ENCODE measurements at regions of chr6 and their contacts with region 1.

Region 1: DNA sequence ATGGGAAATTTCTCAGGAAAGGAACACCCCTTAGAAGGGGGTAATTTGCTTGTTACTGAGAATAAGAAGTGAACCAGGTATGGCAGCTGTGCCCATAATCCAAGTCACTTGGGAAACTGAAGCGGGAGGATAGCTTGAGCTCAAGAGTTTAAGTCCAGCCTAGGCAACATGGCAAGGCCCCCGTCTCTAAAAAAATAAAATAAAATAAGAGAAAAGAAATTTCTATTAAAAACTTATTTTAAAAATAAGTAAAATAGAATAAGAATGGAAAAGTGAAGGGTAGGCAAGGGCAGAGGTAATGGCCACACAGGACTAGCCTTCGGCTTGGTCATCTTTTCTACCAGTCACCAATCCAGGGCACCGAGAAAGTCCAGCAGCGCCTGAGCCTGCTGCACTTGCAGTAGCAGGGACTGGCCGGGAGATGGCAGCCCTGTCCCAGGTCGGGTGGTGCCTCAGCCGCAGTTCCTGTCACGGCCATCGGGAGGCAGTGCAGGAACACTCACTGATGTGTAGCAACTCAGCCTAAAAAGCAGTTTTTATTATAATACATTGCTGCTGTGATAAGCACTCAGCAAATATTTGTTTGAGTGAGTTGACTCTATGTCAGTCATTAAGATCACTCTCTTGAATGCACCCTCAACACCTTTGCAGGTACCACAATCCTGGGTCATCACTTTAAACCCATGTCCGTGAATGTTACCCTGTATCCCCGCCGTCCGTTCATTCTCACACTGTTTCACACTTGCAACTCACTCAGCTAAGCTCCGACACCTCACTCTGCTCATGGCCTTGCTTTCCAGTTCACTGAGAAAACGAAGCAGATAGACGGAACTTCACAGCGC is 23.2 kb upstream of the GCM1 start:
- DNase-seq: peak; percentile 87

Region 2: GRCh38 chr6:52512199-52512598 is 659.6 kb before region 1 on chr6:
- CTCF ChIA-PET with region 1: no interaction called
- POLR2A ChIA-PET with region 1: no interaction called
- DNase-seq: no peak

Region 3: DNA sequence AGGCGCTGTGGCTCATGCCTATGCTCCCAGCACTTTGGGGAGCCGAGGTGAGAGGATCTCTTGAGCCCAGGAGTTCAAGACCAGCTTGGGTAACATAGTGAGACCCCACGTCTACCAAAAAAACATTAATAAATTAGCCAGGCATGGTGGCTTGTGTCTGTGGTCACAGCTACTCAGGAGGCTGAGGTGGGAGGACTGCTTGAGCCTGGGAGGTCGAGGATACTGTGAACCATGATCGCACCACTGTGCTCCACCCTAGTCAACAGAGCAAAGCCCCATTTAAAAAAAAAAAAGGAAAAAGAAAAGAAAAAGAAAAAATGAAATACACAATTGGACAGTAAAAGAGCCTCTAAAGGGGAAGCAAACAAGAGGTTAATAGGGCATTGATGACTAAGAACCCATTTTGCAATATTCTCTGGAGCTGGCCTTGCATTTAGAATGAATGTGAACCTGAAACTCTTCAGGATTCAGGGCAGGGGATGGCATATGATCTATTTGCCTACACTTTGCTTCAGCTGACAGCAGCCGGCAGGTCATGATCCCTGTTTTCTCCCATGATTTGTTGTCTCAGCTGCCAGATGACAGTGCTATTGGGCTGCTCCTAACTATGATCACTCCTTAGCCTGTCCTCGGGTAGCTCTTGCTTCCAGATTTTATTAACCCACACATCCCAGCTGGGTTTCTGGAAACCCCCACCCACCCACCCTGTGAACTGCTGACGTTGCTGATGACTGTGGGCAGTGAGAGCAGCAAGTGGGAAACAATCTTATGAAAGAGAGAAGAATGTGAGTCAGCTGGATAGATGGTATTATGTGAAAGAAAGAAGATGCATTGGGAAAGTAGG is 260.7 kb after region 1 on chr6:
- CTCF ChIA-PET with region 1: interaction called, 13 read pairs
- POLR2A ChIA-PET with region 1: no interaction called
- DNase-seq: no peak

Region 4: GRCh38 chr6:53437557-53438202 is 265.9 kb after region 1 on chr6:
- CTCF ChIA-PET with region 1: interaction called, 13 read pairs
- POLR2A ChIA-PET with region 1: no interaction called
- DNase-seq: peak; percentile 52

Region 5: DNA sequence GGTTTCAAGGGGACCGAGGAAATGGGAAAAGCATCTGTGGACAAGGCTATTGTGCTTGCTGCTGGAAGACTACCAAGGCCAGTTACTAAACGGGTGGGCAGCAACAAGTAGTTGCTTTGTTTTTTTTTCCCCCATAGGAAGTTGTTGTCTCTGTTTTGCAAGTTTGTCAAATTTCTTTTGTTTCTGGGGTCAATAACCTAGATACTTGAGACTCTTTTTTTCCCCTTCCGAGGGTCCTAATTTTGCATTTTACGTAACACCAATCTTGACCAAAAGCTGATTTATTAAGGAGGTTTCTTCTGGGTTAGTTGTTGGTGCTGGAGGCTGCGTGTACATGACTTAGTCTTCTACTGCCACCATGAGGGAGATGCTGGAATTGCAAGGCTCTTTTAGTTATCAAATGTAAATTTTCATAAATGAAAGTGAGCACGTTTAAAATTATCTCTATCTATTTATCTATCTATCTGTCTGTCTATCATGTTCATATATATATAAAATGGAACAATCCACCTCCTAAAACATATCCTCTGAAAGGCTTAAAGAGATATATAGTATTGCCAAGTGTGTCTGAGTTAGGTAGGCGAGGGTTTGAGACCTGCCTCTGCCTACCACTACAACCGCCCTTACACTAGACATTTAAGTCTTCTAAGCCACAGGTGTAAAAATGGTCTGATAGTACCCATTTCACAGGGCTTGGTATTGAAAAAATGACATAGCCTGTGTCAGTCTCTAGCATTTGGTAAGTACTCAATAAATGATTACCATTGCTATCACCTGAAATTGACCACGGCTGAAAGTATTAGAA is 312.9 kb after region 1 on chr6:
- CTCF ChIA-PET with region 1: interaction called, 10 read pairs
- POLR2A ChIA-PET with region 1: no interaction called
- DNase-seq: peak; percentile 42